CD8-positive, alpha-beta memory T cell (primary cell): ENCODE measurements at regions of chr1 and their contacts with region 1.

Region 1: DNA sequence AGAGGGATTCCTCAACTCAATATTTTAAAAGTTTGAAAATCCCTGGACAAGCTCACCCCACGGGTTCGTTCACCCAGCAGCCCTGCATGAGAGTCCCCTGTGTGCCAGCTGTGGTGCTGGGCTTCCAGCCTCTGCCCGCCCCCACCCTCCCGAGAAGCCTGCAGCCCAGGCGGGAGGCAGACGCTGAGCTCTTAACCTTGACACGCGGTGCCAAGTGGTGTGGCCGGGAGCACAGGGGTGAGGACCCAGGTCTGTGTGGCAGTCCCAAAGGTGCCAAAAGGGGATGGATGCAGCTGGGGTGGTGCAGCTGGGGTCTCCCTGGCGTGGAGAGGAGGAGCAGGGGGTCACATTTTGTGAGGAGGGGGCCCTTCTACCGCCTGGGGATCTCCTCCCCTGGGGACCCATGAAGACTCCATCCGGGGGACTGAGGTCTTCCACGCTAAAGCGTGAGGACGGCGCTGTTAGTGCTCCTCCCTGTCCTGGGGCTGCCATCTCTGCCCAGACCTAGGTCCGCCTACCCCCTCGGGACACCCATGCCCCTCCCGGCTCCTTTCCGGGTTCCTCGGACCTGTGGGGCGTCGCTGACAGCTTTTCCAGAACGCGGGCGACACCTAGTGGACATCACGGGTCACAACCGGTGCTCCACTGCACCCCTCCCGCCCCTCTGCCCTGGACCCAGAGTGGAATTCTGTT is 12.9 kb downstream of the PLA2G2F start:
- DNase-seq: peak; percentile 62 to 80 (median 71)
- H3K4me3 ChIP-seq: peak overlapping the region; percentile 55
- H3K4me3 Mint-ChIP-seq: peak overlapping the region; percentile 80 to 84 (median 82)
- H3K27ac ChIP-seq: no peak overlapping the region
- H3K27ac Mint-ChIP-seq: peak overlapping the region in 3 of 8 donors; percentile 35 to 59 (median 36)
- H3K4me1 ChIP-seq: no peaks in the 10 kb centered on the region
- H3K4me1 Mint-ChIP-seq: peaks cover 9 to 21% (median 10%) of the 10 kb centered on the region in 3 donors
- H3K27me3 ChIP-seq: no peaks in the 10 kb centered on the region
- H3K27me3 Mint-ChIP-seq: peaks cover 0 to 2% of the 10 kb centered on the region in 2 donors

Region 2: DNA sequence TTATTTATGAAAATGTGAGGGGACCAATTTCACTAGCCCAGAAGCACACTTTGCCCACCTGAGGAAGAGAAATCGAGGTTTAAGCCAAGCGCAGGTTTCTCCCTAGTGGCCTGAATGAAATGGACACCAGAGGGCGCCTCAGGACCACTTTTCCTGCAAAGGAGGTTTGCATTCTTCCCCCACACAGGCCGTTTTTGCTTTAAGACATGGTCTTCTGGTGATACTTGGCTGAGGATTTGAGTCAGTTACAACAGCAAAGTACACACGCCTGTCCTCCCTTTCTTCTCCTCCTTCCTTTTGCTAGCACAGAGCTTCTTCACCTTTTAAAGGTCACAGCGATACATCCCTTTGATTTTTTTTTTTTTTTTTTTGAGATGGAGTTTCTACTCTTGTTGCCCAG is 234.0 kb before region 1 on chr1:
- CTCF ChIA-PET with region 1: interaction called, 31 read pairs
- POLR2A ChIA-PET with region 1: no interaction called
- DNase-seq: peak; percentile 57 to 81 (median 66)
- H3K4me3 ChIP-seq: no peak overlapping the region
- H3K4me3 Mint-ChIP-seq: no peak overlapping the region
- H3K27ac ChIP-seq: no peak overlapping the region
- H3K27ac Mint-ChIP-seq: no peak overlapping the region
- H3K4me1 ChIP-seq: peaks cover 6% of the 10 kb centered on the region
- H3K4me1 Mint-ChIP-seq: peaks cover 3 to 6% (median 3%) of the 10 kb centered on the region in 3 donors
- H3K27me3 ChIP-seq: no peaks in the 10 kb centered on the region
- H3K27me3 Mint-ChIP-seq: peaks cover 3 to 6% of the 10 kb centered on the region in 2 donors

Region 3: GRCh38 chr1:20126806-20127440 is 25.1 kb before region 1 on chr1:
- CTCF ChIA-PET with region 1: no interaction called
- POLR2A ChIA-PET with region 1: no interaction called
- DNase-seq: no peak
- H3K4me3 ChIP-seq: no peak overlapping the region
- H3K4me3 Mint-ChIP-seq: no peak overlapping the region
- H3K27ac ChIP-seq: no peak overlapping the region
- H3K27ac Mint-ChIP-seq: no peak overlapping the region
- H3K4me1 ChIP-seq: no peaks in the 10 kb centered on the region
- H3K4me1 Mint-ChIP-seq: no peaks in the 10 kb centered on the region
- H3K27me3 ChIP-seq: no peaks in the 10 kb centered on the region
- H3K27me3 Mint-ChIP-seq: peaks cover 9 to 20% of the 10 kb centered on the region in 2 donors

Region 4: DNA sequence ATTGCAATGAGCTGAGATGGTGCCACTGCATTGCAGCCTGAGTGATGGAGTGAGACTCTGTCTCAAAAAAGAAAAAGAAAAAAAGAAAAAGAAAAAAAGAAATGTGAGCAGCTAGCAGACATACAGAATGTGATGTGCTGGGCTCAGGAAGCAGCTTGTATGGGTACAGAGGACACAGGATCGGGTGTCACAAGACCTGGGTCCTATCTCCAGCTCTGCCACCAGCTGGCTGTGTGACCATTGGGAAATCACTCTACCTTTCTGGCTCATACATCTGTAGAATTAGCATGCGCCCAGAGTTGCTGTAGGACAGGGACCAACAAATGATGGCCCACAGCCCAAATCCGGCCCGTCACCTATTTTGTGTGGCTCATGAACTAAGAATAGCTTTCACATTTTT is 37.6 kb after region 1 on chr1:
- CTCF ChIA-PET with region 1: interaction called, 5 read pairs
- POLR2A ChIA-PET with region 1: interaction called, 12 read pairs
- DNase-seq: no peak
- H3K4me3 ChIP-seq: no peak overlapping the region
- H3K4me3 Mint-ChIP-seq: no peak overlapping the region
- H3K27ac ChIP-seq: no peak overlapping the region
- H3K27ac Mint-ChIP-seq: no peak overlapping the region
- H3K4me1 ChIP-seq: peaks cover 37% of the 10 kb centered on the region
- H3K4me1 Mint-ChIP-seq: peaks cover 33 to 35% (median 33%) of the 10 kb centered on the region in 3 donors
- H3K27me3 ChIP-seq: no peaks in the 10 kb centered on the region
- H3K27me3 Mint-ChIP-seq: peaks cover 7 to 36% of the 10 kb centered on the region in 2 donors